Panc1 (cell line): ENCODE measurements at regions of chr16 and their contacts with region 1.

Region 1: GRCh38 chr16:17138801-17139200 is 332.0 kb downstream of the XYLT1 start:
- DNase-seq: no peak
- ATAC-seq: no peak
- H3K4me3 ChIP-seq: no peak overlapping the region
- H3K27ac ChIP-seq: no peak overlapping the region
- H3K4me1 ChIP-seq: no peaks in the 10 kb centered on the region
- H3K27me3 ChIP-seq: peaks cover 3% of the 10 kb centered on the region; the same call in 1 of the 2 replicates
- CTCF ChIP-seq: no peak

Region 2: DNA sequence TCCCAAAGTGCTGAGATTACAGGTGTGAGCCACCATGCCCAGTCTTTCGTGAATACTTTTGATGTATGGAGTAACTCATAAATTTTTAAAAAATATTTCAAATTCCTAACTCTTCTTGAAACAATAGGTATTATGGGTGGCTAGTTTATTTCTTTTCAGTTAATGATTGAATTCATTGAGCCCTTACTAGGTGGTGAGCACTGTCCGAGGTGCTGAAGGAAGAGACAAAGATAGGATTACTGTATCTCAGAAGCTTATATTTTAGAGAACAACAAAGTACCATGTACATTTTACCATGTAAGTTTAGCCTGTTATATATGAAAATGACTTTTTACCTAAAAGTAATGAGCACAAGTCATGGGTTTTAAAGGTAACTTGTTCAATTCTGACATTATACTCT is 341.6 kb before region 1 on chr16:
- CTCF ChIA-PET with region 1: no interaction called
- POLR2A ChIA-PET with region 1: no interaction called
- in situ Hi-C with region 1: no loop called
- intact Hi-C with region 1: no loop called
- DNase-seq: no peak
- ATAC-seq: no peak
- H3K4me3 ChIP-seq: no peak overlapping the region
- H3K27ac ChIP-seq: no peak overlapping the region
- H3K4me1 ChIP-seq: no peaks in the 10 kb centered on the region
- H3K27me3 ChIP-seq: peaks cover 10% of the 10 kb centered on the region
- CTCF ChIP-seq: no peak

Region 3: DNA sequence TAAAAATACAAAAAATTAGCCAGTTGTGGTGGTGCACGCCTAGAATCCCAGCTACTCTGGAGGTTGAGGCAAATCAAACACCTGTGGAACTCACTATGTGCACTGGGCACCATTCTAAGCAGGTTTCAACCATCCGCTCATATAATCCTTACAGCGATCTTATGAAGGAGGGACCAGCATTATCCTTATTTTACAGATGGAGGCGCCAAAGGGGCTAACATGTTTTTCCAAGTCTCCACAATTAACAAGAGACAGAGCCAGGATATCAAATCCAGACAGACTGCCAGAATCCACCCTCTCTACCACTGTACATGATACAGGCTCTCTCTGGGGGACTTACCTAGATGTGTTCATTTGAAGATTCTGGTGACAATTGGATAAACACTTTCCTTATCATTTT is 147.1 kb before region 1 on chr16:
- CTCF ChIA-PET with region 1: interaction called, 14 read pairs
- POLR2A ChIA-PET with region 1: no interaction called
- in situ Hi-C with region 1: no loop called
- intact Hi-C with region 1: no loop called
- DNase-seq: no peak
- ATAC-seq: no peak
- H3K4me3 ChIP-seq: no peak overlapping the region
- H3K27ac ChIP-seq: no peak overlapping the region
- H3K4me1 ChIP-seq: no peaks in the 10 kb centered on the region
- H3K27me3 ChIP-seq: no peaks in the 10 kb centered on the region
- CTCF ChIP-seq: peak; percentile 17; the same call in 1 of the 2 replicates